Caco-2 (cell line): ENCODE measurements at regions of chr2 and their contacts with region 1.

Region 1: GRCh38 chr2:18749912-18750526 is 160.7 kb upstream of the NT5C1B start:
- DNase-seq: peak in 1 of 2 experiments; percentile 69
- H3K4me3 ChIP-seq: no peak overlapping the region
- H3K4me3 Mint-ChIP-seq: no peak overlapping the region
- H3K27ac Mint-ChIP-seq: no peak overlapping the region
- H3K4me1 ChIP-seq: no peaks in the 10 kb centered on the region
- H3K4me1 Mint-ChIP-seq: no peaks in the 10 kb centered on the region
- H3K27me3 ChIP-seq: no peaks in the 10 kb centered on the region
- H3K27me3 Mint-ChIP-seq: peaks cover 8% of the 10 kb centered on the region
- CTCF ChIP-seq: peak; percentile 73 to 84

Region 2: DNA sequence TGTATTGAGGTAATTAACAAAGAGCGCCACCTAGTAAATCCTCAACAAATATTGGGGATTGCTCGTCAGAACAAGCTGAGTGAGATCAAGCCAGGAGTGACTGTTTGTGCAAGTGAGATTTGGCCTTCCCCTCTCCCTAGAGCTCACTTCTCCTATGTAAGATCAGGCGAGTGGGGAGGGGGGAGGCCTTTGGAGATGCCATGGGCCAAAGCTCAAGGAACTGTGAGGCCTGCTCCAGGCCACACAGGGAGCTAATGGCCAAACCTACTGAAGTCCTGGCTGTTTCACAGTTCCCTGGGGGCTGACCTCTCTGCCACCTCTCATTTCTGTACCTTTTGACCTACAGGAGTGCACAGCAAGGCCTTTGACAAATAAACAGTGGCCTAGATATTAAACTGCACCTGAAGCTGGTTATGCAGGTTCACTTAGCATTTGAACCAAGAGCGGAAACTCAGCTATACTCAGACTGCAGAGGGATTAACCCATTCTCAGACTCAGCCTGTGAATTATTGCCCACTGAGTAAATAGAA is 74.3 kb after region 1 on chr2:
- CTCF ChIA-PET with region 1: no interaction called
- POLR2A ChIA-PET with region 1: no interaction called
- intact Hi-C with region 1: loop called (anchors 2 kb)
- DNase-seq: peak; percentile 69 to 76
- H3K4me3 ChIP-seq: no peak overlapping the region
- H3K4me3 Mint-ChIP-seq: no peak overlapping the region
- H3K27ac Mint-ChIP-seq: no peak overlapping the region
- H3K4me1 ChIP-seq: peaks cover 39% of the 10 kb centered on the region
- H3K4me1 Mint-ChIP-seq: peaks cover 25% of the 10 kb centered on the region
- H3K27me3 ChIP-seq: no peaks in the 10 kb centered on the region
- H3K27me3 Mint-ChIP-seq: no peaks in the 10 kb centered on the region
- CTCF ChIP-seq: no peak

Region 3: DNA sequence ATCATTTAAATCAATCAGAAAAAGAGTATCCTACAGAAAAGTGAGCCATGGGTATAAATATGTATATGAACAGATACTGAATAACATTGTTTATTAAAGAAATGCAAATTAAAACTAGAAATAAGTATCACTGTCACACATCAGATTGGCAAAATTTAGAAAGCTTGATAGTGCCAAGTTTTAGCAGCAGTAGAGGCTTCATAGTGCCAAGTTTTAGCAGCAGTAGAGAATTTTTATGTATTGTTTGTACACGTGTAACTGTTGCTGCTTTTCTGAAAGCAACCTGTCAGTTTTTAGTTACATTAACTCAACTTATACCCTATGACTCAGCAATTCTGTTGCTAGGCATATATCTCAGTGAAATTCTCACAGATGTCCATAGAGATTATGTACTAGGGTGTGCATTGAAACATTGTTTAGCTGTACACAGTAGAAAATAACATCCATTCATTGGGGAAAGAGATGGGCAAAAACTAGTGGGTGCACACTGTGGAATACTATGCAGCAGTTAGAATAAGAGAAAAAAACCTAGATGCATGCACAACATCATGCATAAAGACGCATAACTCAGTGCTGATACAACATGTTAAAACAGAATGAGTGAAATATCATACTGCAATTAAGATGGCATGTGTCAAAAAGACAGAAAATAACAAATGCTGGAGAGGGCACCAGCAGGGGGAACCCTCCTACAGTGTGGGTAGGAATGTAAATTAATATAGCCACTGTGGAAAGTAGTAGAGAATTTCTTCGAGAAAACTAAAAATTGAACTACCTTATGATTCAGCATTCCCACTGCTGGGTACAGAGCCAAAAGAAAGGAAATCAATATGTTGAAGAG is 133.8 kb after region 1 on chr2:
- CTCF ChIA-PET with region 1: no interaction called
- POLR2A ChIA-PET with region 1: no interaction called
- intact Hi-C with region 1: loop called (anchors 5 kb)
- DNase-seq: peak in 1 of 2 experiments; percentile 16
- H3K4me3 ChIP-seq: no peak overlapping the region
- H3K4me3 Mint-ChIP-seq: no peak overlapping the region
- H3K27ac Mint-ChIP-seq: no peak overlapping the region
- H3K4me1 ChIP-seq: no peaks in the 10 kb centered on the region
- H3K4me1 Mint-ChIP-seq: no peaks in the 10 kb centered on the region
- H3K27me3 ChIP-seq: no peaks in the 10 kb centered on the region
- H3K27me3 Mint-ChIP-seq: no peaks in the 10 kb centered on the region
- CTCF ChIP-seq: peak; percentile 38 to 51

Region 4: DNA sequence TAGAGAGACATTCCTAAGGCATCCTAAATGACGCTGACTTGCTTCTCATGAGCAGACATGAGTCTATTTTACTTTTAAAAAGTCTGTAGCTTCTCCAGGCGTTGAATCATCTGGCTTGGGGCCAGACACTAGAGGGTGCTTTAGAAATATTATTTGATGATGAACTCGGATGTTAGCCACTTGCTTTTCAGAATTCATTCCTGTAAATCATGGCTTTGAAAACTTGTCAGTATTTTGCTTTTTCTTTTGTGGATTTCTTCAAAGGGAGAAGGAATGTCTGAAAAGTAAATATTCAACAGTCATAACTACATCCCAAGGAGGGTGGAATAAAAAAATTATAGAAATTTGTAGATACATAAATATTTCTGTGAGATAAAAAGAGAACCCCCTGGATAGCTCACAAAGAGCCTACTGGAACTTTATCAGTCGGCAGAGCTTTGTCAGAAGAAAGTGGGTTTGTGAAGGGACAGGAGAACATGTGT is 237.6 kb after region 1 on chr2:
- CTCF ChIA-PET with region 1: no interaction called
- POLR2A ChIA-PET with region 1: no interaction called
- intact Hi-C with region 1: loop called (anchors 5 kb)
- DNase-seq: peak in 1 of 2 experiments; percentile 18
- H3K4me3 ChIP-seq: no peak overlapping the region
- H3K4me3 Mint-ChIP-seq: no peak overlapping the region
- H3K27ac Mint-ChIP-seq: no peak overlapping the region
- H3K4me1 ChIP-seq: no peaks in the 10 kb centered on the region
- H3K4me1 Mint-ChIP-seq: peaks cover 6% of the 10 kb centered on the region
- H3K27me3 ChIP-seq: no peaks in the 10 kb centered on the region
- H3K27me3 Mint-ChIP-seq: no peaks in the 10 kb centered on the region
- CTCF ChIP-seq: peak in 1 of 2 experiments; percentile 40